ENCODE measurements at regions of chr20 and their contacts with region 1.

Region 1: GRCh38 chr20:56392282-56393137 is at the start of gene CSTF1:
- DNase-seq: peak; percentile 100
- ATAC-seq: peak; percentile 99
- total RNA-seq, gene CSTF1: 16.8 TPM

Region 2: GRCh38 chr20:56468316-56469082 is 76.0 kb after region 1 on chr20 and contains the start of gene RTF2:
- intact Hi-C with region 1: loop called (anchors 1 kb)
- DNase-seq: peak; percentile 96
- ATAC-seq: peak; percentile 100
- total RNA-seq, gene RTF2: 78.7 TPM

Region 3: GRCh38 chr20:56540420-56540819 is 147.9 kb after region 1 on chr20:
- intact Hi-C with region 1: no loop called
- DNase-seq: no peak
- ATAC-seq: no peak

Region 4: DNA sequence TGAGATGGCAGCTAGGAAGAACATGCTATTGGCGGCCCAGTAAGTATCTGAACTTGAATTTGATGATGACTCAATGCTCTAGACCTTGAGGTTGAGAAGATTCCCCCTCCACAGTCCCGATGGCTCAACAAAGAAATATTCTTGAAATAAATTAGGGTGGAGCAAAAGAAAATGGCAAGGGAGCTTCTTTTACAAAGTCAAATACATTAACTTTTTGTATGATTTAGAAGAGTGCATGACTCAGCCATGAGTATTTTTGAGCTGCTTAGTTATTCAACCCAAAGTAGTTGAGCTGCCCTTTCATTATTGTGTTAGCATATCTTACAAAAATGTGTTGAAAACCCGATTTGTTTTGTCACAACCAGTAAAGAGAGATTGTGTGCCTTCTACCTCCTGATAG is 244.2 kb after region 1 on chr20:
- intact Hi-C with region 1: no loop called
- DNase-seq: no peak
- ATAC-seq: no peak

Measured in Right ventricle myocardium superior (tissue), 1 donor.